ENCODE measurements at regions of chr3 and their contacts with region 1.

Region 1: GRCh38 chr3:38136777-38137614 is at the start of gene ACAA1:
- DNase-seq: peak; percentile 82 to 96 (median 93)
- ATAC-seq: peak; percentile 96
- H3K4me3 ChIP-seq: peak within 1 kb of the TSS; percentile 98
- H3K4me3 Mint-ChIP-seq: peak within 1 kb of the TSS; percentile 90 to 100 (median 96)
- H3K27ac ChIP-seq: peak within 1 kb of the TSS; percentile 90
- H3K27ac Mint-ChIP-seq: peak within 1 kb of the TSS; percentile 89 to 100 (median 98)
- H3K4me1 ChIP-seq: peaks cover 18 to 35% of the 10 kb centered on the region in 2 donors
- H3K4me1 Mint-ChIP-seq: peaks cover 47 to 86% (median 67%) of the 10 kb centered on the region in 7 donors
- H3K27me3 ChIP-seq: no peaks in the 10 kb centered on the region
- H3K27me3 Mint-ChIP-seq: no peaks in the 10 kb centered on the region
- total RNA-seq, gene ACAA1: 88.1 to 129 (median 91.0) TPM

Region 2: DNA sequence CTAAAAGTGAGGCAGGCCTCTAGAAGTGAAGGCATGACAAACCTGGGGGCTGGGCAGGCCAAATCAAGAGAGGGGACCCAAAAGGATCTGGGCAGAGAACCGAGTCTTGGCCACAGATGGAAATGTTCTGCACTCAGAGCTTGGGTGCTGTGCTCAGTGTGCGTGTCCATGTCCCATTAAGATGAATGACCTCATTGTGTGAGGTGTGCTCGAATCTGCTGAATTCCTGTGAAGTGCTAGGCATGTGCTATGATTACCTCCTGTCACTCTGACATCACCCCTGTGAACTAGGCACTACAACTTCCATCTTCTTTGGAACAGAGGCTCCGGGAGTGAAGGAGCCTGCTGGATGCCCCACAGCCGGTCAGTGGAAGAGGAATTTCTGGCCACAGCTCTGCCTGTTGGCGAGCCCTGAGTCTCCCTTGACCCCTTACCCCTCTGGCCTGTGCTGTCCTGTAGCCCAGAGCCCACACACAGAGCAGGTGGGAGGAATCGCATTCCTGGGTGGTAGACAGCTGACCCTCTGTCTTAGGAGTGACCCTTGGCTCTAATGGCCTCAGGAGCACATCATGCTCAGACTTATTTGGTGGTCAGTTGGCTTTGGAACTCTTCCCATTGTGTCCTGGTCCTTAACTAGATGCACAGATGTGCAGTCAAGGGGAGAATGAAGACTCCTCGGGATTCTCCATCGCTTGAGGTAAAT is 343.0 kb before region 1 on chr3:
- CTCF ChIA-PET with region 1: no interaction called
- POLR2A ChIA-PET with region 1: no interaction called
- intact Hi-C with region 1: no loop called
- DNase-seq: no peak
- ATAC-seq: no peak
- H3K4me3 ChIP-seq: no peak overlapping the region
- H3K4me3 Mint-ChIP-seq: no peak overlapping the region
- H3K27ac ChIP-seq: no peak overlapping the region
- H3K27ac Mint-ChIP-seq: peak overlapping the region in 1 of 9 donors; percentile 32
- H3K4me1 ChIP-seq: no peaks in the 10 kb centered on the region
- H3K4me1 Mint-ChIP-seq: peaks cover 0 to 1% (median under 1%) of the 10 kb centered on the region in 7 donors
- H3K27me3 ChIP-seq: no peaks in the 10 kb centered on the region
- H3K27me3 Mint-ChIP-seq: peaks cover 0 to 8% (median 0%) of the 10 kb centered on the region in 5 donors

Region 3: DNA sequence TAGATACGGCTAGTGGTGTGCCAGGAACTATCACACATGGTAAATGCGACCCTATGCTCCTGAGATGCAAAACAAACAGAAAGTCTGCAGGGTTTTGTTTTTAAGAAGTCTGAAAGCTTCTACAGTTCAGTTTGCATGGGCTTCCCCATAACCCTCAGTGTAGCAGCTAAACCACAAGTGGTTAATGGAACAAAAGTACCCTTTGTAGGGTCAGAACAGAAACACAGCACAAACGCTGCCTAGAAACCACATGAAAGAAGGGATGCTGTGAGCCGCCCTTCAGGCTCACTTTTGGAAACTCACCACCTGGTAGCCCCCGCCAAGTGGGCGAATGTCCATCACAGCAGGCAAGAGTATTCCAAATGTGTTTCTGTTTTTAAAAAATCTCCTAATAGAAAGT is 229.1 kb before region 1 on chr3:
- CTCF ChIA-PET with region 1: no interaction called
- POLR2A ChIA-PET with region 1: no interaction called
- intact Hi-C with region 1: loop called in 1 of 2 experiments (anchors 1 kb)
- DNase-seq: peak in 1 of 9 donors; percentile 30
- ATAC-seq: no peak
- H3K4me3 ChIP-seq: no peak overlapping the region
- H3K4me3 Mint-ChIP-seq: peak overlapping the region in 5 of 10 donors; percentile 7 to 69 (median 32)
- H3K27ac ChIP-seq: no peak overlapping the region
- H3K27ac Mint-ChIP-seq: peak overlapping the region in 1 of 9 donors; percentile 68
- H3K4me1 ChIP-seq: peaks cover 8 to 16% of the 10 kb centered on the region in 2 donors
- H3K4me1 Mint-ChIP-seq: peaks cover 18 to 56% (median 32%) of the 10 kb centered on the region in 7 donors
- H3K27me3 ChIP-seq: no peaks in the 10 kb centered on the region
- H3K27me3 Mint-ChIP-seq: no peaks in the 10 kb centered on the region

Region 4: GRCh38 chr3:38117748-38118420 is 19.1 kb before region 1 on chr3:
- CTCF ChIA-PET with region 1: interaction called, 5 read pairs
- POLR2A ChIA-PET with region 1: interaction called, 4 read pairs
- intact Hi-C with region 1: loop called in 1 of 2 experiments (anchors 1 kb)
- DNase-seq: peak; percentile 59 to 79 (median 73)
- ATAC-seq: peak; percentile 90
- H3K4me3 ChIP-seq: no peak overlapping the region
- H3K4me3 Mint-ChIP-seq: no peak overlapping the region
- H3K27ac ChIP-seq: no peak overlapping the region
- H3K27ac Mint-ChIP-seq: peak overlapping the region in 5 of 9 donors; percentile 22 to 84 (median 49)
- H3K4me1 ChIP-seq: no peaks in the 10 kb centered on the region
- H3K4me1 Mint-ChIP-seq: peaks cover 4 to 15% (median 7%) of the 10 kb centered on the region in 7 donors
- H3K27me3 ChIP-seq: no peaks in the 10 kb centered on the region
- H3K27me3 Mint-ChIP-seq: no peaks in the 10 kb centered on the region

Region 5: GRCh38 chr3:38221005-38221404 is 84.0 kb after region 1 on chr3:
- CTCF ChIA-PET with region 1: no interaction called
- POLR2A ChIA-PET with region 1: interaction called, 3 read pairs
- intact Hi-C with region 1: loop called in 1 of 2 experiments (anchors 5 kb)
- DNase-seq: no peak
- ATAC-seq: no peak
- H3K4me3 ChIP-seq: no peak overlapping the region
- H3K4me3 Mint-ChIP-seq: no peak overlapping the region
- H3K27ac ChIP-seq: no peak overlapping the region
- H3K27ac Mint-ChIP-seq: peak overlapping the region in 2 of 9 donors; percentile 6 to 83
- H3K4me1 ChIP-seq: no peaks in the 10 kb centered on the region
- H3K4me1 Mint-ChIP-seq: peaks cover 0 to 14% (median 5%) of the 10 kb centered on the region in 7 donors
- H3K27me3 ChIP-seq: no peaks in the 10 kb centered on the region
- H3K27me3 Mint-ChIP-seq: no peaks in the 10 kb centered on the region

Region 6: DNA sequence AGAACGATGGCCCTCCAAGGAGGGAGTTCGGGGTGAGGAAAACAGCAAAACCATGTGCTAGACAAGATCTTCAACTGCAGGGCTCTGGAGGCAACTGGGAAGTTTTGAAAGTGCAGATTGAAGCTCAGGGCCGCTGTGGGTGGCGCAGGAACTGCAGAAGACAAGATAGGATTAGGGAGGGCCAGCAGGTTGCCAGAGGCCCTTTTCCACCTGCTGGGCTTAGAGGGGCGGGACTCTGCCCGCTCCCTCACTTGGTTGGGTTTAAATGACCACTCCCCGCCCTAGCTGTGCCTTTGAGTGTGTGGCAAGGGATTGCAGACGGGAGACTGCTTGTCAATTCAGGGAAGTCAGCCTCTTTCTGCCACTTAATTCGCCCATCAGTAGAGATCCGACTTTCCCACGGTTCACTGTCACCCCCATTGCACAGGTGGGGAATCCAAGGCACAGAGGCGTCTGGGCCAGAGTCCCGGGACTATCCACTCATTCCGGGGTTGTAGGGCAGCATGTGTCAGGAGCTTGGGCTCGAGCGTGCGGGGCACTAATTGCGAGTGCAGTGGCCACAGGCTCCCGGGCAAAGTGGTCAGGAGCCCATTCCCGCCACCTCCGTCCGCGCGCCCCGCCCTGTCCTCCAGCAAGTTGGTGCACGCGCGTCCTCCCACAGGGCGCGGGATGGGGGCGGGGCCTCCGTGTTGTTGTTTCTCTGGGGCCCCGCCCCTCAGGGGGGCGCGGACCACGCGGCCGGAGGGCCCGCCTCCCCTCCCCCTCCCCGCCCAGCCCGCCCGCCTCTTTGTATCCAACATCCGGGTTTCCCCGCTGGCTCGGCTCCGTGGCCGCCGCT is 316.3 kb after region 1 on chr3 and contains the start of gene ACVR2B:
- CTCF ChIA-PET with region 1: no interaction called
- POLR2A ChIA-PET with region 1: interaction called, 4 read pairs
- intact Hi-C with region 1: loop called (anchors 1 kb)
- DNase-seq: peak; percentile 20 to 83 (median 58)
- ATAC-seq: peak; percentile 74
- H3K4me3 ChIP-seq: peak within 1 kb of the TSS; percentile 74
- H3K4me3 Mint-ChIP-seq: peak within 1 kb of the TSS; percentile 88 to 99 (median 97)
- H3K27ac ChIP-seq: peak within 1 kb of the TSS; percentile 60
- H3K27ac Mint-ChIP-seq: peak within 1 kb of the TSS; percentile 59 to 95 (median 91)
- H3K4me1 ChIP-seq: peaks cover 5 to 12% of the 10 kb centered on the region in 2 donors
- H3K4me1 Mint-ChIP-seq: peaks cover 7 to 32% (median 25%) of the 10 kb centered on the region in 7 donors
- H3K27me3 ChIP-seq: no peaks in the 10 kb centered on the region
- H3K27me3 Mint-ChIP-seq: peaks cover 0 to 18% (median 0%) of the 10 kb centered on the region in 5 donors
- total RNA-seq, gene ACVR2B: 3.8 to 14.0 (median 8.3) TPM

Region 7: DNA sequence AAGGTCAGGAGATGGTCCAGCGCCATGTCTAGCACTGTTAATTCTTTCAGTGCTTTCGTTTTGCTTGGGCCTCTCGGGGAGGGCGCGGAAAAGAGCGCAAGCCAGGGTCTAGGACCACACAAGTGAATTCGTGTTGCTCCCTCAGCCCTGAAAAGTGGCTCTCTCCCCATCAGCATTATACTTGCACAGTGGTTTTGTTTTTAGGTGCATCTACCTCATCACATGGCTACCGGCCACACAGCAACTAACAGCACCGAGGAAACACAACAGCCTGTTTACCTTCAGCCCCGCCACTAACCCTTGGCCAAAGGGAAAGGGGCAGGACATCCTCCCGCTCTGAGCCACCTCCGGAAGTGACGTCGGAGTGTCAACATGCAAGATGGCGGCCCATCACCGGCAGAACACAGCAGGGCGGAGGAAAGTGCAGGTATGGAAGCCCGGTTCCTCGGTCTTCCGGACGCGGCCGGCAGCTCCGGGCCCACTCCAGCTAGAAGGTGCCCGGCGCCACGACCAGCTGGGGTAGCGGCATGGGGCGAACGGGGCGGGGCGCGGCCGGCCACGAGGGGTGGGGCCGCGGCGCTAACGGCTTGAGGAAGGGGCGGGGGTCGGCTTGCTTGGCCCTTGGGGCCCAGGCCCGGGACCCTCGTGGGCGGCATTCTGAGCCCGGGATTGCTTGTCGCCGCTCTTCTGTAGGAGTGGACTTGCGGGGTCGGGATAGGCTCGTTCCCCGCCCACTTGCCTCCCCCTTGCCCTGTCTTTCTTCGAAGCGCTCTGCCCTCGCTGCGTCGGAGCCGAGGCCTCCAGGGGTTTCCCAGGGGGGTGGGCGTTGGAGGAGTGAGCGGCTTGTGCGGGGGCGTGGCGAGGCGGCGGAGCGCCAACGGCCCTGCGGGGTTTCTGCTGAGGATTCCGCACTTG is 914.9 kb after region 1 on chr3 and contains the starts of genes SCN11A and WDR48:
- CTCF ChIA-PET with region 1: no interaction called
- POLR2A ChIA-PET with region 1: no interaction called
- intact Hi-C with region 1: loop called (anchors 1 to 10 kb)
- DNase-seq: peak; percentile 78 to 95 (median 90)
- ATAC-seq: peak; percentile 93
- H3K4me3 ChIP-seq: peak within 1 kb of the TSS; percentile 80
- H3K4me3 Mint-ChIP-seq: peak within 1 kb of the TSS; percentile 91 to 99 (median 99)
- H3K27ac ChIP-seq: peak within 1 kb of the TSS; percentile 98
- H3K27ac Mint-ChIP-seq: peak within 1 kb of the TSS; percentile 95 to 100 (median 99)
- H3K4me1 ChIP-seq: peaks cover 7 to 16% of the 10 kb centered on the region in 2 donors
- H3K4me1 Mint-ChIP-seq: peaks cover 32 to 81% (median 77%) of the 10 kb centered on the region in 7 donors
- H3K27me3 ChIP-seq: no peaks in the 10 kb centered on the region
- H3K27me3 Mint-ChIP-seq: no peaks in the 10 kb centered on the region
- total RNA-seq, gene SCN11A: 0.07 to 0.32 (median 0.19) TPM
- total RNA-seq, gene WDR48: 46.7 to 97.7 (median 68.0) TPM

Region 8: DNA sequence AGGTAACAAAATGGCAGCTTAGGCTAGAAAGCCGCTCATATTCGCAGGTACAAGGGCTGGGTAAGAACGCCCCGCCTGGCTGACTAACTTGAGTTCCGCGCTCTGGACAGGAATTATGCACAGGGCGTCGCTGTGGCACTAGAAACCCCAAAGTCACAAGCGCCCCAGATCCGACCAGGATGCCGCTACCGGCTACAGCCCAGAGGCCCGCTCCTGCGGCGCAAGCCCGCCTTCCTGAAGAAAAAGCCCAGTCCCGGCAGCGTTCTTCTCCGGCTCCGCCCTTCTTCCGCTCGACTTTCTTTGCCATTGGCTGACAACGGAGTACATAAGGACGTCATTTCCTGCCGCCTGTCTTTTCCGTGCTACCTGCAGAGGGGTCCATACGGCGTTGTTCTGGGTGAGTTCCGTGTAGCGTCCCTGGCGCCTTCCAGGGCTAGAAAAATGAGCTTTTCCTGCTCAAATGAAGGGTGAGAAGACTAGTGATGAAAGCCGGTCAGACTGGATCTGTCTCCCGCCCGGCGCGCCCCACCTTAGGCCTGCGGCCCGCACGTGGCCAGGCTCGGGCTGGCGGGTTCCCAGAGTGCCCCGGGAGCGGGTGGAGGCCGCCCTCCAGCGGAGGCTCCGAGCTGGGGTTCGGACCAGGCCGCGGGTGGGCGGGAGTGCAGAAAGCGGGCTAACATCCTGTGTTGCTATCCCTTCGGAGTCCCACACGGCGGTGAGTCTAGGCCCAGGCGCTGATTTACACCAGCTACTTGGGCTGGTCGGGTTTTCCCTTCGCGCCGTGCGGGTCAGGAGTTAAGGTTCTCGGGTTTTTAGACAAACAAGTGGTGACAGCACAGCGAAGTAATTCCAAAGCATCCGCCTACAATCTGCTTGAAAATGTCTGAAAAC is 1269.6 kb after region 1 on chr3 and contains the start of gene RPSA:
- CTCF ChIA-PET with region 1: no interaction called
- POLR2A ChIA-PET with region 1: no interaction called
- intact Hi-C with region 1: loop called in 1 of 2 experiments (anchors 10 kb)
- DNase-seq: peak; percentile 80 to 99 (median 98)
- ATAC-seq: peak; percentile 96
- H3K4me3 ChIP-seq: peak within 1 kb of the TSS; percentile 62
- H3K4me3 Mint-ChIP-seq: peak within 1 kb of the TSS; percentile 88 to 97 (median 94)
- H3K27ac ChIP-seq: peak within 1 kb of the TSS; percentile 86
- H3K27ac Mint-ChIP-seq: peak within 1 kb of the TSS; percentile 88 to 98 (median 96)
- H3K4me1 ChIP-seq: peaks cover 30 to 37% of the 10 kb centered on the region in 2 donors
- H3K4me1 Mint-ChIP-seq: peaks cover 28 to 55% (median 51%) of the 10 kb centered on the region in 7 donors
- H3K27me3 ChIP-seq: no peaks in the 10 kb centered on the region
- H3K27me3 Mint-ChIP-seq: peaks cover 0 to 2% (median 0%) of the 10 kb centered on the region in 5 donors
- total RNA-seq, gene RPSA: 1,411 to 1,898 (median 1,693) TPM